Spleen (tissue), 13 donors: ENCODE measurements at regions of chr2 and their contacts with region 1.

Region 1: GRCh38 chr2:113203901-113204519 is 30.2 kb downstream of the PSD4 start:
- DNase-seq: peak; percentile 87
- H3K4me3 ChIP-seq: no peak overlapping the region
- H3K27ac ChIP-seq: peak overlapping the region in 5 of 8 donors; percentile 3 to 66 (median 60)
- H3K4me1 ChIP-seq: peaks cover 0 to 31% (median 14%) of the 10 kb centered on the region in 6 donors
- H3K27me3 ChIP-seq: no peaks in the 10 kb centered on the region
- CTCF ChIP-seq: peak; percentile 79 to 94 (median 88)
- POLR2A ChIP-seq: no peak

Region 2: DNA sequence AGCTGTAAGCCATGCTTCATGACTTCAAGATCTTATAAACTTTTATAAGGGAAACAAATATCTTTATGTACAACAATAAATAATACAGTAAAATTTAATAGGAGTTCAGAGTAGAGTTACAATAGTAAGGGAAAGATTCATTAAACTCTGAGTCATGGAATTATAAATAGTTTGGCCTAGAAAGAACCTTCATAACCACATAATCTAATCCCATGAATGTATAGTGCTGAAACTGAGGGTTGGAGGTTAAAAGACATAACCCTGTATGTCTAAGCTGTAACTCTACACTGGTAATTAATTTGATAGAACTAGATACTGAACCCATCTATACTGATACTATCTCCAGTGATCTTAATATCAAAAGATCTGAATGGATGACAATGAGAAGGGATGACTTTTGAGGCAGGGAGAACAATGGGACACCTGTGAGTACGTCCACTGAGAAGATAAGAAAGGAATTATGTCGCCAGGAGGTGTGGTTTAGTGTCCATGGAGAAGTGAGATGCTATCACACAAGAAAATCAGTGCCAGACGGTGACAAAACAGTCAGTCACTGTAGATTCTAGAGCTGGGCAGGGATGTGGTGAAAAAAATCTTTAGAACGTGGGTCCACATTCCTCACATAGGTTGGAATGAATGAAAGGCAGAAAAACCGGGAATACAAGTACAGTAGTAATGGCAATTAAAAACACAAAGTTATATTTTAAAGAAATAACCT is 135.1 kb before region 1 on chr2:
- intact Hi-C with region 1: no loop called
- DNase-seq: no peak
- H3K4me3 ChIP-seq: no peak overlapping the region
- H3K27ac ChIP-seq: no peak overlapping the region
- H3K4me1 ChIP-seq: no peaks in the 10 kb centered on the region
- H3K27me3 ChIP-seq: peaks cover 0 to 7% (median 0%) of the 10 kb centered on the region in 7 donors
- CTCF ChIP-seq: no peak
- POLR2A ChIP-seq: no peak

Region 3: DNA sequence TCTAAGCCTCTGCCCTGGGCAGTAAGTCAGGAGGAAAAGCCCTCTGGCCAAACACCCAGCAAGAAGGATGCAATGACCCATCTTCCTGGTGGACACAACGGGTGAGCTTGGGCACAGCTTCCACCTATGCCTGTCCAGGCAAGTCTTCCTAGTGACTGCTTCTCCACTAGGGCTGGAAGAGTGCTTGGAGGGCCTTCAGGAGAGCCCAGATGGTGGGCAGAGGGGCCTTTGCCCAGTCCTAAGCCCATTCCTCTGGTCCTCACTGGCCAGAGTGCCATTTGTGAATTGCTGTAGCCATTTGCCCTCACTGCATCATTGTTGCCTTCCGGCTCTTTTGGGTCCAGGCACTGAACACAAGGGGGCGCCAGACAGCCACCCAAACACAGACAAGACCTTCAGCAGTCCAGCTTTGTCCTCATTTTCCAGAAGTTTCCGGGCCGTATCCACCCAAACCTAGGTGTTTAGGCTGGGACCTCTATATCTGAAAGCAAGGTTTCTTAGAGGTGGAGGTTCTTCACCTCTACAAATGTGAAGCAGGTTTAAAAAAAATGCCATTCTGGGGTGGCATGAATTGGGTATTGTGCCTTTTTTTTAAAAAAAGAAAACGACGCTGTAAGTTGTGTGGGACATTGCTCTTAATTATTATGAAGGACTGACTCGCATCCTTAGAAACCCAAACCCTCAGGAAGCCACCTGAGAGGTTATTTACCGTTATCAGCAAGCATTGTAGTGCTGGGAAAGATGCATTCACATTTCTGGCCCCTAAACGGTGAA is 45.2 kb after region 1 on chr2:
- intact Hi-C with region 1: loop called (anchors 10 kb)
- DNase-seq: peak; percentile 89
- H3K4me3 ChIP-seq: no peak overlapping the region
- H3K27ac ChIP-seq: no peak overlapping the region
- H3K4me1 ChIP-seq: peaks cover 5 to 38% (median 19%) of the 10 kb centered on the region in 6 donors
- H3K27me3 ChIP-seq: no peaks in the 10 kb centered on the region
- CTCF ChIP-seq: peak; percentile 71 to 93 (median 90)
- POLR2A ChIP-seq: no peak

Region 4: DNA sequence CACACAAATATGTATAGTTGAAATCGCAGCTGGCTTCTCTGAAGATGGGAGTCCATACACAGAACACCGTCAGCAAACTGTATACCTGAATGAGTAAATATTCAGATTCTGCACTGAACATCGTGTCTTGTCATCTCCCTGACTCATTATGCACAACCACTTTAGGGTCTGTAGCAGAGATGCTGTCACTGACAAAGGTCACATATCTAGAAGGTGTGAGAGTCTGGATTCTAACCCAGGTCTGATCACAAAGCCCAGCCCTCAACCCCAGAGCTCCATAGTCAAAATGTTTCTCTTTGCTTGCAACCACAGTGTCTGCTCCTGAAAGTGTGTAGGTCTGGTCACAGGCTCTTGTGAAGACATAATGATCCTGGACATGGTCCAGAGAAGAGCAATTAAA is 153.1 kb after region 1 on chr2:
- intact Hi-C with region 1: no loop called
- DNase-seq: no peak
- H3K4me3 ChIP-seq: no peak overlapping the region
- H3K27ac ChIP-seq: no peak overlapping the region
- H3K4me1 ChIP-seq: no peaks in the 10 kb centered on the region
- H3K27me3 ChIP-seq: no peaks in the 10 kb centered on the region
- CTCF ChIP-seq: no peak
- POLR2A ChIP-seq: no peak